ENCODE measurements at regions of chr17 and their contacts with region 1.

Region 1: DNA sequence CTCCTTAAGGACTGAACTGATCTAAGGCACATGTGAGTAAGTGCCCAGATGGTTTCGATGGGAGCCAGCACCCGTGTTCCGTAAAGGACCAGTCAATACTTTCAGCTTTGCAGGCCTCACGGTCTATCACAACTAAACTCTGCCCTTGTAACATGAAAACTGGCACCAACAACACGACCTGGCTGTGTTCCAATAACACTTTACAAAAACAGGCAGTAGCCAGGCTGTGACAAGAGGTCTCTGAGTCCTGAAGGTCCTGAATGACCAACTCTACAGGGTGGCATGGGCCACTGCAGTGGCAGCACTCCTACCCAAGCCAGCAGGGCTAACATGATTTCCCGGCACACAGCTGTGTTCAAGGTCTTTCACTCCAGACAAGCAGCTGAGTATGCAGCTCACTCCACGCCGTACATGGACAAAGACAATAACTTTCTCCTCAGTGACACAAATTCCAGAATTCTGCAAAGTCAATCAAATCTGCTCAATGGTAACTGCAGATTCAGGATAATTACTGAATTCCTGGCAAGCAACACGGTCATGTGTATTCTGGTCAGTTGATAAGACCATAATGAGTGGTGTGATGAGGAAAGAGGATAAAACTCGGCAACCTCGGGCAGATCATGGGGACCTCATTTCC is 15.3 kb downstream of the NPLOC4 start:
- DNase-seq: no peak
- H3K4me3 ChIP-seq: no peak overlapping the region
- H3K27ac ChIP-seq: no peak overlapping the region
- H3K4me1 ChIP-seq: no peaks in the 10 kb centered on the region
- H3K27me3 ChIP-seq: no peaks in the 10 kb centered on the region
- CTCF ChIP-seq: no peak
- EP300 ChIP-seq: no peak
- POLR2A ChIP-seq: no peak
- RAD21 ChIP-seq: no peak

Region 2: DNA sequence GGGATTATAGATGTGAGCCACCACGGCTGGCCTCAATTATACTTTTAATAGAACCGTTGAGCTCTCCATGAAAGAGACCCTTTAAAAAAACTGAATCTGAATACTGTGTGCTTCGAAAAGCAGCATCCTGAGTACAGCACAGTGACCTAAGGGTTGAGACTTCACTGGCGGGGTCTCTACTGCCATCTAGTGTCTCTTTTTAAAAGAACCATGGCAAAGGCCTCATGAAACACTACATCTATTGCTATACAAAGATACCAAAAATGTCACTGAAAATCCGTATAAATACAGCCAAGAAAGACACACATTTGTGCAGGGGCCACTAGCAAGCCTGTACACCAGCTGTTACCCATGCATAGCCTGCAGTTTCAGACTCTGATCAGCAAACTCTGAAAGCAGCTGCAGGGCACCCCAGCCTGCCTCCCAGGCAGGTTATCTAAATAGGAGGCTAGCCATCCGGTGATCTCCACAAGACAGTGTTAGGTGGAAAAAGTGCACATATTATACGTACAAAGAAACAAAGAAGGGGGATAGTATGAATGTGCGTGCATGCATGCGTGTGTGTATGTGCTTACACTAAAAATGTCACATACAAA is 20.0 kb before region 1 on chr17:
- CTCF ChIA-PET with region 1: interaction called, 16 read pairs
- POLR2A ChIA-PET with region 1: interaction called, 4 read pairs
- DNase-seq: peak in 1 of 2 experiments; percentile 50
- H3K4me3 ChIP-seq: no peak overlapping the region
- H3K27ac ChIP-seq: no peak overlapping the region
- H3K4me1 ChIP-seq: no peaks in the 10 kb centered on the region
- H3K27me3 ChIP-seq: no peaks in the 10 kb centered on the region
- CTCF ChIP-seq: peak in 2 of 3 experiments; percentile 54 to 72; a peak in 3 of 4 replicates
- EP300 ChIP-seq: no peak
- POLR2A ChIP-seq: no peak
- RAD21 ChIP-seq: peak; percentile 51 to 57

Region 3: GRCh38 chr17:81607431-81607830 is 14.2 kb before region 1 on chr17:
- CTCF ChIA-PET with region 1: interaction called, 16 read pairs
- POLR2A ChIA-PET with region 1: interaction called, 4 read pairs
- DNase-seq: no peak
- H3K4me3 ChIP-seq: no peak overlapping the region
- H3K27ac ChIP-seq: no peak overlapping the region
- H3K4me1 ChIP-seq: no peaks in the 10 kb centered on the region
- H3K27me3 ChIP-seq: no peaks in the 10 kb centered on the region
- CTCF ChIP-seq: no peak
- EP300 ChIP-seq: no peak
- POLR2A ChIP-seq: no peak
- RAD21 ChIP-seq: no peak

Region 4: DNA sequence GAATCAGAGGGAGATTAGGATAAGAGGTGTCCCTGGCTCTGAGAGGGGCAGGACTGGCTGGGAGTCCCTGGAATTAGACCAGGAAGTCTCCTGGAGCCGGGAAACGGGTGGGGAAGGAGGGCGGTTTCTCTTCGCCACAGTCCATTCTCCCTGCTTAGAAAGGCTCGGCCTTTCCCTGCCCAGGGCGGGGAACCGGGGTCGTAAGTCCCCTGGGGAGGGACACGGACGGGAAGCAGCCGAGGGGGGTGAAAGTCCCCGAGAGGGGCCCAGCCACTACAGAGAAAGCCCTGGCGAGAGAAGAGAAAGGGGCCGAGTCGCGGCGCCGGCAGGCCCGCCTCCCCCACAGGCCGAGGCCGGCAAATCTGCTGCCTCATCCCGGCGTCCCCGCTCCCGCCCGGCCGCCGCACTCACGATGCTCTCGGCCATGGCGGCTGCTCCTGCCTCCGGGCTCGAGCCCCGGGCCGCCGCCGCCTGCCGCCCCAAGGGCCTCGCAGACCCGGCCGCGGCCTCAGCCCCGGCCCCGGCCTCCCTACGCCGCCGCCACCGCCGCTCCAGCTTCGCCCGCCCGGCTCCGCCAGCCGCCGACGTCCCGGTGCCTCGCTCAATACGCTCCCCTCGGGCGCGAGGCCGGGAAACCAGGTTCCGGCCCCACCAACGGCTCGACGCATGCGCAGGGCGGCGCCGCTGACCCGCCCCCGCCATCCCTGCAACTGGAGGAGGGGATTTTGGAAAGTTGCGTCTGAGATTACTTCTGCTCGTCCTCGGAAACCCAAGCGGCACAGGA is 15.1 kb after region 1 on chr17 and contains the starts of genes NPLOC4 and TSPAN10:
- CTCF ChIA-PET with region 1: interaction called, 3 read pairs
- POLR2A ChIA-PET with region 1: interaction called, 11 read pairs
- DNase-seq: peak; percentile 58 to 94
- H3K4me3 ChIP-seq: peak within 1 kb of the TSS; percentile 78 to 96 (median 87)
- H3K27ac ChIP-seq: peak within 1 kb of the TSS; percentile 83
- H3K4me1 ChIP-seq: no peaks in the 10 kb centered on the region
- H3K27me3 ChIP-seq: no peaks in the 10 kb centered on the region
- CTCF ChIP-seq: no peak
- EP300 ChIP-seq: peak in 1 of 2 experiments; percentile 71; a peak in 1 of 3 replicates
- POLR2A ChIP-seq: peak in 1 of 2 experiments; percentile 92; a peak in 2 of 3 replicates
- RAD21 ChIP-seq: no peak; a peak in 1 of 4 replicates
- total RNA-seq, gene NPLOC4: 79.8 and 92.7 TPM in 2 replicates
- total RNA-seq, gene TSPAN10: 0.96 and 0.99 TPM in 2 replicates

Measured in H1 (cell line).